Colonic mucosa (tissue), 4 donors: ENCODE measurements at regions of chr10 and their contacts with region 1.

Region 1: DNA sequence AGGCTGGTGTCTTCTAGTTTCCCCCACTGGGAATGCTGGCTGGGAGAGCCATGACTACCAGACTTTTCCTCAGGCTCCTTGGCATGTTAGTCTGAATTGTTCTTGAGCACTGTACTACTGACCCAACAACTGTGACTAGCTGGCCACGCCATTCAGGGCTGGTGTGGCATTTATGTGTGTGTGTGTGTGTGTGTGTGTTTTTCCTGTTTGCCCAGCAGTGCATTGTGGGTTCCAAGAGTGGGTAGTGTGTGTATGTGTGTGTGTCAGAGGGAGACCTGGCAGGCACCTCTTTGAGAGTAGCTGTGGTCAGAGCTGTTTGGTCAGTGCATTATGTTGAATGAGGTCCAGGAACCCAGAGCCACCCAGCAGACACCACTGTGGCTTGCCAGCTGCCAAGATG is 9.2 kb downstream of the PCBD1 start:
- DNase-seq: no peak
- H3K4me3 ChIP-seq: no peak overlapping the region
- H3K27ac ChIP-seq: no peak overlapping the region
- H3K4me1 ChIP-seq: no peaks in the 10 kb centered on the region
- H3K27me3 ChIP-seq: no peaks in the 10 kb centered on the region
- CTCF ChIP-seq: no peak

Region 2: GRCh38 chr10:70549962-70550458 is 329.2 kb before region 1 on chr10:
- intact Hi-C with region 1: loop called (anchors 5 kb)
- DNase-seq: peak; percentile 69
- H3K4me3 ChIP-seq: no peak overlapping the region
- H3K27ac ChIP-seq: no peak overlapping the region
- H3K4me1 ChIP-seq: no peaks in the 10 kb centered on the region
- H3K27me3 ChIP-seq: no peaks in the 10 kb centered on the region
- CTCF ChIP-seq: peak; percentile 92

Region 3: GRCh38 chr10:70815504-70816219 is 63.5 kb before region 1 on chr10 and contains the start of gene SGPL1:
- intact Hi-C with region 1: loop called (anchors 1 kb)
- DNase-seq: peak; percentile 91
- H3K4me3 ChIP-seq: peak within 1 kb of the TSS; percentile 62
- H3K27ac ChIP-seq: peak within 1 kb of the TSS; percentile 90
- H3K4me1 ChIP-seq: peaks cover 5% of the 10 kb centered on the region
- H3K27me3 ChIP-seq: no peaks in the 10 kb centered on the region
- CTCF ChIP-seq: peak; percentile 97
- total RNA-seq, gene SGPL1: 59.8 to 67.6 TPM

Region 4: GRCh38 chr10:70832852-70833528 is 46.2 kb before region 1 on chr10:
- intact Hi-C with region 1: no loop called
- DNase-seq: no peak
- H3K4me3 ChIP-seq: no peak overlapping the region
- H3K27ac ChIP-seq: no peak overlapping the region
- H3K4me1 ChIP-seq: peaks cover 12% of the 10 kb centered on the region
- H3K27me3 ChIP-seq: no peaks in the 10 kb centered on the region
- CTCF ChIP-seq: no peak

Region 5: GRCh38 chr10:70940834-70941568 is 61.8 kb after region 1 on chr10:
- intact Hi-C with region 1: no loop called
- DNase-seq: no peak
- H3K4me3 ChIP-seq: no peak overlapping the region
- H3K27ac ChIP-seq: no peak overlapping the region
- H3K4me1 ChIP-seq: no peaks in the 10 kb centered on the region
- H3K27me3 ChIP-seq: no peaks in the 10 kb centered on the region
- CTCF ChIP-seq: no peak

Region 6: DNA sequence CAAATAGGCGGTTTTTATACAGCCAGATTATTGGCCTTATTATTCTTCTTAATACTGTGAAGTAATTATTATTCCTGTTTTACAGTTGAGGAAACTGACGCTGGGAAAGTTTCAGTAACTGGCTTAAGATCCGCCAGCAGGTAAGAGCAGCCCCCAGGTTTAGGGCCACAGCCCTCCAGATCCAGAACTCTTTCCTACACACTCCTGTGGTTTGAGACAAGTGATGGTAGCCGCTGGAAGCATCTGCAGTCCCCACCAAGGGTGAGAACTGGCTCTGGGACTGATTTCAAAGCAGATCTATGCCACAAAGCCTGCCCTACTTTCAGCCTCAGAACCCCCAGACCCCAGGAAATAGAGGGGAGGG is 330.1 kb after region 1 on chr10:
- intact Hi-C with region 1: no loop called
- DNase-seq: no peak
- H3K4me3 ChIP-seq: no peak overlapping the region
- H3K27ac ChIP-seq: no peak overlapping the region
- H3K4me1 ChIP-seq: no peaks in the 10 kb centered on the region
- H3K27me3 ChIP-seq: peaks cover 24% of the 10 kb centered on the region
- CTCF ChIP-seq: no peak